ENCODE measurements at regions of chr16 and their contacts with region 1.

Region 1: DNA sequence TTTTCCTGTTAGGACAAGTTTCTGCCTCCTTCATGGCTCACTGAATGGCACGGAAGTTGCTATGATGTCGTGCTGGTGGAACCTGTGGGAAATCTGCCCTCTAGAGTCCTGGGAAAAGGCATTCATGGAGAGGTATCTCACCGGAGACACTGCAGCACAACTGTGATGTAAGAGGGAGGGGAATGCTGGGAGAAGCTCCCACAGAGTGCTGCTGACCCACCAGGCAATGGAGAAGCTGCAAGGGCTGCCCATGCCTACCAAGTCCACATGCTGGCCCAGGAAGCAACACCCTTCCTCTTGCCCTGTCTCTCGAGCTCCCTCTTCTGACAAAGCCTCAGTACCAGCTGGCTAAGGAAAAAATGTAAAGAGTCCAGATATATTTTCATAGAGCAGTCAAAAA is 45.2 kb upstream of the SLC5A11 start:
- DNase-seq: no peak
- H3K4me3 ChIP-seq: no peak overlapping the region
- CTCF ChIP-seq: peak; percentile 28

Region 2: GRCh38 chr16:24568392-24568791 is 232.2 kb before region 1 on chr16:
- in situ Hi-C with region 1: loop called (anchors 10 kb)
- DNase-seq: no peak
- H3K4me3 ChIP-seq: no peak overlapping the region
- CTCF ChIP-seq: peak; percentile 17

Region 3: DNA sequence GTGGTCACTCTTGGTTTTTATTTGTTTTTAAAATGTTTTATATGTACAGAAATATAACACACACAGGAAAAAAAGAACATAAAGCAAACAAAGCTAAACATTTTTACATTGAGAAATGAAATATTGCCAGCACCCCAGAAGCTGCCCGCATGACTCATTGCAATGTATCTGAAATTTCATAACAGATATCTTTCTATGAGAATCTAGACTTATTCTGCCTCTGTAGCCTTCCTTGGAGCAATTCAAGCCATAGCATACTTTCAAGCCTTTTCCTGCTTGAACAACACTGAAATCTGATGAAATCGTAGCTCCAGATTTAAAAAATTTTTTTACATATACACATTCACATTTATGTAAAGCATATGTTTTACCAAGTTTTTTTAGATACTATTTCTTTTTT is 174.3 kb before region 1 on chr16:
- in situ Hi-C with region 1: no loop called
- DNase-seq: no peak
- H3K4me3 ChIP-seq: no peak overlapping the region
- CTCF ChIP-seq: no peak

Region 4: DNA sequence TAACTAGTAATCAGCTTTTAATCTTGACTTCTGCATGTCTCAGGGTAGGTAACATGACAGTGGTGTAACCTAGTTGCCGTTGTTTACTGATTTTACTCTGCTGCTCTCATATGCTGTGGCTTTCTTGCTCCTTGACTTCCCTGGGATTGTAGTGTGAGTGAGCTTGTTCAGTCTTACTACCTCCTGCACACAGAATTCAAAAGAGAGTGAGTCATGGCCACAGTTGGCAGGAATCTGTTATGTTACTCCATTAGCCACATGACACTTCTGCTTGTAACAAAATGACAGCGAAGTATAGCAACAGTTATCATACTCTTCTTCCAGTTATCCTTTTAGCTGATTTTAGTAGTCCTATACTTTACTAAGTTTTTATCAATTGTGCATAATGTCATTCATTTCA is 52.3 kb before region 1 on chr16:
- in situ Hi-C with region 1: no loop called
- DNase-seq: peak; percentile 92
- H3K4me3 ChIP-seq: no peak overlapping the region
- CTCF ChIP-seq: no peak